ENCODE measurements at regions of chr17 and their contacts with region 1.

Region 1: DNA sequence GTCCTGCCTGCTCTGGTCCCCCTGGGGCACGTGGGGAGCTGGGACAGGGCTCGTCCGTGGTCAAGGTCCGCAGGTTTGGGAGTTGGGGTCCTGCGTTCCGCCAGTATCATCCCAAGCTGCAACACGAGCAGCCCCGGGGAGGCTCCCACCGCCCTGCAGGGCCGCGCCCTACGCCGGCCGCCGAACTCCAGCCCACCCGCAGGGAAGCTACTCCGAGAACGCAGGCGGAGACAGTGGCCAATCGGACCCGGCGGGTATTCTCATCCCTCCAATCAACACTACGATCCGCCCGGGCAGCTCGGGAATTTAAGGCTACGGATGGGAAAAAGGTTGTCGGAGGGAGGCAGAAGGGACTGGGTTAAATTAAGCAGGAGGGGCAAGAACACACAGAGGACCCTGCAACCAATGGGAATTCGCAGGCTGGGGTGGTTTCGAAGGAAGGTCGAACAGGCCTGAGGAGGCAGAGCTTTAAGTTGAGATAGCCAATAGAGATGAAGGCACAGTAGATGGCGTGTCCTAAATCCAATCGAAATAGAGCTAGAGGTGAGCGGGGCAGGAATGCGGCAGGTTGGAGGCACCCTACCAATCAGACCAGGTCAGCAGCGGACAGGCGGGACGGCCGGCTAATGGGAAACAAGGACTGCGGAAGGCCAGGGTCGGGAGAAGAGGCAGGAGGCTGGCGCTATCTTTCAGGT is 626 bp downstream of the SPAG7 start:
- DNase-seq: peak; percentile 98 to 99 (median 98)
- H3K4me3 ChIP-seq: peak overlapping the region; percentile 43 to 99 (median 67)
- H3K4me3 Mint-ChIP-seq: no peak overlapping the region
- H3K27ac ChIP-seq: peak overlapping the region; percentile 94 to 96
- H3K27ac Mint-ChIP-seq: no peak overlapping the region
- H3K4me1 ChIP-seq: peaks cover 33 to 58% of the 10 kb centered on the region in 2 donors
- H3K4me1 Mint-ChIP-seq: peaks cover 32% of the 10 kb centered on the region
- H3K27me3 ChIP-seq: no peaks in the 10 kb centered on the region
- H3K27me3 Mint-ChIP-seq: peaks cover 0 to 4% (median 2%) of the 10 kb centered on the region in 3 donors
- CTCF ChIP-seq: no peak

Region 2: DNA sequence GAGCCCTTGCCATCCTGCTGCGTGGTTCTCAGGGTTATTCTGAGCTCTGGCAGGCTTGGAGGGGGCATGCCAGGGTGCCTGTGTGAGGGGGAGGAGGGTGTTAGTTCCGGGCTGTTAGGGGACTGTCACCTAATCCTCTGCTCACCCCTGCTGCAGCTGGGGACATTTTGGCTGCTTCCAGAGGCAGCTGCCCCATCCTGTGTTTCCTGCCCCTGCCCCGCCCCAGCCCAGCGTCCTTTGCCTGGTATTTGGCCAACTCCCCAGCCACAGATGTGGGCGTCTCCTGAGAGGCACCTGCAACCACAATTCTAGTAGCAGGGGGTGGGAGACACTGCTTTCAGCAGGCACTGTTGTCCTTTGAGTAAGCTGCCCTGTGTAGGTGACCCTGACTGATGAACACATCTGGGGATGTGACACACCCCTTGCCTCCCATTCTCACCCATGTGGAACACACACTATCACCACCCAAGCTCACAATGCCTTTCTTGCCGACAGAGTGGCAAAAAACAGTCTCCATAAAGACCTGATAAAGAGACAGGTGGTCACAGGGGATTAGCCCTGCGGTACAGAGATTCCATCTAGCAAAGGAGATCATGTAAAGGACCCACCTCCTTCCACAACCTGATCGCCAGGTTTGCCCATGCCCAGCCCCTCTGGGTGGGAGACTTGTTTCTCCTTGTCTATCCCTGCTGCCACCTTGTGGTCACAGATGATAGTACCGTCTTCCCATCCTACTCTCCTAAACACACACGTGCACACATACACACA is 63.8 kb before region 1 on chr17 and contains the start of gene CHRNE:
- intact Hi-C with region 1: loop called in 1 of 2 experiments (anchors 1 kb)
- DNase-seq: peak; percentile 62 to 78 (median 64)
- H3K4me3 ChIP-seq: peak within 1 kb of the TSS in 1 of 3 experiments; percentile 83
- H3K4me3 Mint-ChIP-seq: peak within 1 kb of the TSS; percentile 62 to 68
- H3K27ac ChIP-seq: peak within 1 kb of the TSS; percentile 33 to 80
- H3K27ac Mint-ChIP-seq: peak within 1 kb of the TSS; percentile 79 to 96 (median 85)
- H3K4me1 ChIP-seq: peaks cover 47 to 53% of the 10 kb centered on the region in 2 donors
- H3K4me1 Mint-ChIP-seq: peaks cover 43% of the 10 kb centered on the region
- H3K27me3 ChIP-seq: peaks cover 0 to 26% of the 10 kb centered on the region in 2 donors
- H3K27me3 Mint-ChIP-seq: peaks cover 38 to 61% (median 60%) of the 10 kb centered on the region in 3 donors
- CTCF ChIP-seq: peak; percentile 91
- polyA plus RNA-seq, gene CHRNE: 0.54 to 12.6 (median 2.1) TPM

Region 3: GRCh38 chr17:4939796-4940624 is 27.0 kb before region 1 on chr17 and contains the starts of genes RNF167 and SLC25A11:
- intact Hi-C with region 1: loop called in 1 of 2 experiments (anchors 2 kb)
- DNase-seq: peak; percentile 99 to 100 (median 99)
- H3K4me3 ChIP-seq: peak within 1 kb of the TSS; percentile 76 to 94 (median 78)
- H3K4me3 Mint-ChIP-seq: peak within 1 kb of the TSS; percentile 90 to 96
- H3K27ac ChIP-seq: peak within 1 kb of the TSS; percentile 94
- H3K27ac Mint-ChIP-seq: peak within 1 kb of the TSS; percentile 95 to 98 (median 97)
- H3K4me1 ChIP-seq: peaks cover 55 to 61% of the 10 kb centered on the region in 2 donors
- H3K4me1 Mint-ChIP-seq: peaks cover 62% of the 10 kb centered on the region
- H3K27me3 ChIP-seq: no peaks in the 10 kb centered on the region
- H3K27me3 Mint-ChIP-seq: peaks cover 0 to 4% (median 0%) of the 10 kb centered on the region in 3 donors
- CTCF ChIP-seq: no peak
- polyA plus RNA-seq, gene RNF167: 17.2 to 105 (median 20.6) TPM
- polyA plus RNA-seq, gene SLC25A11: 65.2 to 138 (median 111) TPM

Region 4: GRCh38 chr17:4980644-4981216 is 13.7 kb after region 1 on chr17:
- intact Hi-C with region 1: no loop called
- DNase-seq: peak in 2 of 3 donors; percentile 53 to 57
- H3K4me3 ChIP-seq: no peak overlapping the region
- H3K4me3 Mint-ChIP-seq: peak overlapping the region in 1 of 2 donors; percentile 1
- H3K27ac ChIP-seq: peak overlapping the region in 1 of 2 donors; percentile 78
- H3K27ac Mint-ChIP-seq: peak overlapping the region; percentile 26 to 85 (median 70)
- H3K4me1 ChIP-seq: peaks cover 56 to 60% of the 10 kb centered on the region in 2 donors
- H3K4me1 Mint-ChIP-seq: peaks cover 64% of the 10 kb centered on the region
- H3K27me3 ChIP-seq: no peaks in the 10 kb centered on the region
- H3K27me3 Mint-ChIP-seq: no peaks in the 10 kb centered on the region
- CTCF ChIP-seq: peak; percentile 91

Region 5: DNA sequence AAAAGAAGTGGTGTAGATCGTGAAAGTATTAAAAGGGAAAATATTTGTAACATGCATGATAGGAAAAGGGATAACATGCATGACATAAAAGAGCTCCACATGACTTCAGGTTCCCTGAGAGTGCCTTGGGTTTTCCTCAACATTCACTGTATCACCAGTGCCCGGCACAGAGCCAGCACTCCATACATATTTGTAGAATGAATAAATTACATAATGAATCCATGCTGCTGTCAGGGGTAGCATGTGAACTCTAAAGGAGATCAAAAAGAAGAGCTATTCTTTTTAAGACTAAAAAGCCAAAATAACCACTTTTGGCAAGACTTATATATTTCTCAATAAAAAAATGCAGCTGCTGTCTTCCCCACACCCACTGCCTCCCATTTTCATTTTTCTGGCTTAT is 227.4 kb after region 1 on chr17:
- intact Hi-C with region 1: no loop called
- DNase-seq: no peak
- H3K4me3 ChIP-seq: no peak overlapping the region
- H3K4me3 Mint-ChIP-seq: no peak overlapping the region
- H3K27ac ChIP-seq: no peak overlapping the region
- H3K27ac Mint-ChIP-seq: no peak overlapping the region
- H3K4me1 ChIP-seq: peaks cover 12 to 22% of the 10 kb centered on the region in 2 donors
- H3K4me1 Mint-ChIP-seq: peaks cover 20% of the 10 kb centered on the region
- H3K27me3 ChIP-seq: no peaks in the 10 kb centered on the region
- H3K27me3 Mint-ChIP-seq: no peaks in the 10 kb centered on the region
- CTCF ChIP-seq: no peak

Measured in CD14-positive monocyte (primary cell).